ENCODE measurements at regions of chr9 and their contacts with region 1.

Region 1: GRCh38 chr9:73023025-73023541 is 70.2 kb upstream of the ALDH1A1 start:
- DNase-seq: peak; percentile 84 to 89 (median 87)
- H3K4me3 ChIP-seq: no peak overlapping the region
- H3K27ac ChIP-seq: no peak overlapping the region
- H3K4me1 ChIP-seq: peaks cover 3 to 10% (median 3%) of the 10 kb centered on the region in 4 experiments
- H3K27me3 ChIP-seq: no peaks in the 10 kb centered on the region

Region 2: GRCh38 chr9:72788966-72789735 is 233.9 kb before region 1 on chr9:
- CTCF ChIA-PET with region 1: no interaction called
- POLR2A ChIA-PET with region 1: no interaction called
- DNase-seq: no peak
- H3K4me3 ChIP-seq: no peak overlapping the region
- H3K27ac ChIP-seq: no peak overlapping the region
- H3K4me1 ChIP-seq: no peaks in the 10 kb centered on the region
- H3K27me3 ChIP-seq: no peaks in the 10 kb centered on the region

Region 3: DNA sequence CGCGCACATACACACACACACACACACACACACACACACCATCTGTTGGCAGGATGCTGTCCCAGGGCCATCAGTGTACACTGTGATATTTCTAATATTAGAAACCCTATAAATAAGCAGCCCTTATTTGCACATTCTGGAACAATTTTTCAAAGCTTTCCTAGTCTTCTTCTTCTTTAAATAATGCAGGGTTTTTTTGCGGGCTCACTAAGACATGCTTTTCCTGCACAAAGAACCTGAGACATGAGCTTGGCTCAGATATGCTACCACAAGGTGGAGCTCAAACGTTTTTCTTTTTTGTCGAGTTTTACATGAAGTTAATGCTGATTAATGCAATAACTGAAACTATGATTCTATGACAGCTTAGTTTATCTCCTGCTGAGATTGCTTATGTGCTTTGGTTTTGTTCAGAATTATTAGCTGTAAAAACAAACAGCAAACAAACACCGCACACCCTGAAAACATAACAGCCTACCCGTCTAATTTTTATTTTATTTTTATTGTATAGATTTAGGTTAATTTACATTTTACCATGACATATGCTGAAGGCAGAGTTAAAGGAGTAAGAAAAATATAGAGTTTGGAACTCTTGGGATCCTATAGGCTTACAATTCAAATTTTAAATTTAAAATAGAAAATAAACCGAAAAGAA is 166.0 kb before region 1 on chr9:
- CTCF ChIA-PET with region 1: interaction called, 20 read pairs
- POLR2A ChIA-PET with region 1: no interaction called
- DNase-seq: peak; percentile 72 to 86 (median 80)
- H3K4me3 ChIP-seq: no peak overlapping the region
- H3K27ac ChIP-seq: no peak overlapping the region
- H3K4me1 ChIP-seq: peaks cover 0 to 4% (median 2%) of the 10 kb centered on the region in 4 experiments
- H3K27me3 ChIP-seq: no peaks in the 10 kb centered on the region

Region 4: GRCh38 chr9:72937545-72937944 is 85.5 kb before region 1 on chr9:
- CTCF ChIA-PET with region 1: interaction called, 11 read pairs
- POLR2A ChIA-PET with region 1: no interaction called
- DNase-seq: no peak
- H3K4me3 ChIP-seq: no peak overlapping the region
- H3K27ac ChIP-seq: no peak overlapping the region
- H3K4me1 ChIP-seq: peaks cover 0 to 3% (median 0%) of the 10 kb centered on the region in 4 experiments
- H3K27me3 ChIP-seq: no peaks in the 10 kb centered on the region

Region 5: DNA sequence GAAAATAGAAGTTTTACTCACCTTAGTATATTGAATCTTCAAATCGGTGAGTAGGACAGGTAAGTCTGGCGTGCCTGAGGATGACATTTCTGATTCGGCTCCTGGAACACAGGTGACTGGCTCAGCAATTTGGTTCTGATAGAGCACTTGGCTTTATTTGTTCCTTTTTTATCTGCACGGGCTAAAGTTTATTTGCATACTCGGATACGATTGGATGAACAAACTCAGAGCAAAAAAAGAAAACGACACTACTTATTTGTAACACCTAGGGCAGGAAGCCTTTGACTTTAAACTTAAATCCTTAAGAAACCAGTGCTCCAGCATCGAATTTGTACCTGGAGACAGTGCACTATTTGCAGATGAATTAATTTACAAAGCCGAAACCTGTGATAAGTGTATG is 70.2 kb before region 1 on chr9 and contains the start of gene ALDH1A1:
- CTCF ChIA-PET with region 1: interaction called, 41 read pairs
- POLR2A ChIA-PET with region 1: no interaction called
- DNase-seq: peak; percentile 56 to 78 (median 75)
- H3K4me3 ChIP-seq: peak within 1 kb of the TSS in 6 of 7 experiments; percentile 62 to 90 (median 76)
- H3K27ac ChIP-seq: peak within 1 kb of the TSS; percentile 59 to 80
- H3K4me1 ChIP-seq: peaks cover 28 to 53% (median 38%) of the 10 kb centered on the region in 4 experiments
- H3K27me3 ChIP-seq: no peaks in the 10 kb centered on the region

Region 6: DNA sequence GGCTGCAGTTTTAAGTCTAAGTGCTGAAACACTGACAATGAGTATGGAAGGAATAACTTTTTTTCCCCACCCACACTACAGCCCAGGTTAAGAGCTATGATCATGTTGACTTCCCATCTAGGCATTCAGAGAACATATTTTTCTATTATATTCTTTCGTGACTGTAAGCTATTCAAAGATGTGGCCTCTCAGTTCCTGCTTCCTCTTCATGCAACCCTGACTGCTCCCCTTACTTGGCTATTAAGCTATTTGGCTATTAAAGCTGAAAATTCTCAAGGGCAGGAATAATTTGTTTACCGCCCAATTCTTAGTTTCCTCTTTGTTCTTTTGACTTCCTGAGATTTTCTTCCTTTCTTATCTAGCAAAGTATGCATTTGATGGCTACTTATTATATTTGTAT is 51.7 kb before region 1 on chr9:
- CTCF ChIA-PET with region 1: no interaction called
- POLR2A ChIA-PET with region 1: no interaction called
- DNase-seq: no peak
- H3K4me3 ChIP-seq: no peak overlapping the region
- H3K27ac ChIP-seq: no peak overlapping the region
- H3K4me1 ChIP-seq: peaks cover 0 to 10% (median 3%) of the 10 kb centered on the region in 4 experiments
- H3K27me3 ChIP-seq: no peaks in the 10 kb centered on the region

Region 7: DNA sequence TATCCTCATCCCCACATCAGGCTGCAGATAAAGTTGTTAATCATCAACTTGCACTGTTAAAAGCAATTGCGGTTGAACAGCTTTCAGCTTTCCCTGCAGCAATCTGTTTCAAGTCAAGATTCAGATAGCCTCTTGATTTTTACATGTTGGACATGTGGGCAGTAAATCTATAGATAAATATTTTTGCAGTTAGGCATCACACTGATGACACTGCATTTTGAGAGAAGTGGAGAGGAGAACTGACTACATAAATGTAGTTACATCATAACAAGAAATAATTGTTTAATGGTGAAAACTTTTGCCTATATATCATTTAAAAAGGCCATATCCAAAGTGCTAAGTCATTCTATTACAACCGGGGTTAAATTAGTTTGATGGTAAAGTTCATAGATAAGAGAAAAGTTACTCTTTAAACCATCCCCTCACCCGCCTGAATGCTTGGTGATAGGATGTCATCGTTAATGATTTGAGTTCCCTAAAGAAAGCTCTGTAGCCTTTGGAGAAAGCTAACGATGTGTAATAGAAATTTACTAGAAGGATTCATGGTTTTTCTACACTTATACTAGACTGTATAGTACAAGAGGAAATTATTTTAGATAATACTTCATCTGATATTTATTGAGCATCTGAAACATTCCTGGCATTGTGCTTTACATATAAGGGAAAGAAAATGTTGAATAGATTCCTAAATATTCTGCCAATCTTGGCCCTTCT is 39.4 kb before region 1 on chr9:
- CTCF ChIA-PET with region 1: no interaction called
- POLR2A ChIA-PET with region 1: no interaction called
- DNase-seq: peak in 2 of 3 donors; percentile 56 to 57
- H3K4me3 ChIP-seq: no peak overlapping the region
- H3K27ac ChIP-seq: no peak overlapping the region
- H3K4me1 ChIP-seq: peaks cover 0 to 31% (median 9%) of the 10 kb centered on the region in 4 experiments
- H3K27me3 ChIP-seq: no peaks in the 10 kb centered on the region

Region 8: DNA sequence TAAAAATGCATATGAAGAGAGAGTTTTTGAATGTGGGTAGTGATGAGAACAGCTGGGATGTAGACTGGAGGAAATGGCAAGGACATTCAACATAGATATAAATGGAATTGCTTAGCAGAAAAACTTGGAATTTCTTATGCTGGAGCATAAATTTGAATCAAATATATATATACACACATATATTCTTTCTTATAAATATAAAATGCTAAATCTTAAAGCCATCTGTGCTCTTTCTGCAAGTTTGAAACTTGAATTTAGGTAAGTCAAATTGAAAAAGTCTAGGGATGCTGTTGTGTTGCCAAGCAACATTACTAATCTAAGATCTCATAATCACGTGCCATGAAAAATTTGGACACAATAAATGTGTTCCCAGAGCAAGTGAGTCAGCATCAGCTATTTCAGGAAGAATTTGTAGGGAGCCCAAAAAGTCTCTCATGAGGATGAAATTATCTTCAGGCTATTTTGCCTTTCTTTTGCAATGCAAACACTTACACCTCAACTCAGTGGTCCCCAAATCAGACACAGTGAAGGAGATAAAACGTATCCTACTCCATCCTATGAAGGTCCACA is 11.8 kb before region 1 on chr9:
- CTCF ChIA-PET with region 1: interaction called, 23 read pairs
- POLR2A ChIA-PET with region 1: no interaction called
- DNase-seq: no peak
- H3K4me3 ChIP-seq: no peak overlapping the region
- H3K27ac ChIP-seq: no peak overlapping the region
- H3K4me1 ChIP-seq: peaks cover 20 to 47% (median 41%) of the 10 kb centered on the region in 4 experiments
- H3K27me3 ChIP-seq: no peaks in the 10 kb centered on the region